ENCODE measurements at regions of chr11 and their contacts with region 1.

Region 1: GRCh38 chr11:25597696-25598095 is 734.2 kb upstream of the ANO3 start:
- DNase-seq: no peak
- ATAC-seq: no peak
- H3K4me3 ChIP-seq: no peak overlapping the region
- H3K27ac ChIP-seq: no peak overlapping the region
- H3K4me1 ChIP-seq: no peaks in the 10 kb centered on the region
- H3K27me3 ChIP-seq: no peaks in the 10 kb centered on the region
- CTCF ChIP-seq: no peak
- POLR2A ChIP-seq: no peak

Region 2: DNA sequence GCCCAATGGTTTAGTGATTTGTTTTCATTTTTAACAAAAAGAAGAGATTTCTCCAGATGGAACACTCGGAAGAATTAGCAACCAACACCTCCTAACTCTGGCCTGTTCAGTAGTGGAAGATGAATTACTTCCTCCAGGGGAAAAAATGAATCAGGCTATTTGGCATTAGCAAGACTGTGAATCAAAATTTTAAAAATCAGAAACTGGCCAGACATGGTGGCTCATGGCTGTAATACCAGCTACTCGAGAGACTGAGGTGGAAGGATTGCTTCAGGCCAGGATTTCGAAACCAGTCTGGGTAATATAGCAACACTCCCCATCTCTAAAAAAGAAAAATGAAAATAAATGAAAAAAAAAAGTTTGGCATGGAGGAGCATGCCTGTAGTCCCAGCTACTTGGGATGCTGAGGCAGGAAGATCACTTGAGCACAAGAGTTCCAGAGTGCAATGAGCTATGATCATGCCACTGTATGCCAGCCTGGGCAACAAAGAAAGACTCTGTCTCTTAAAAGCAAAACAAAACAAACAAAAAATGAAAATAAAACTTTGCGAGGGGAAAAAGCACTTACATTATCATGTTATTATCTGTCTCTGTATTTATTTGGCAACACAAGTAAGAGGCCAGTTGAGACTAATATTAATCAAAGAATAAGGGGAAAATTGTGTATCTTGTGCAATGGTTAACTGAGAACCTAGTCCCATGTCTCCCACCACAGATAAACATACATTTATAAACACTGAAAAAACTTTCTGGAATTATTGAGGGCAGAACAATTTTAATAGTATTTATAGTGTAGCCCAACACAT is 62.0 kb before region 1 on chr11:
- intact Hi-C with region 1: loop called in 1 of 10 experiments (anchors 10 kb)
- DNase-seq: peak in 1 of 5 donors; percentile 22
- ATAC-seq: peak; percentile 42 to 92 (median 68)
- H3K4me3 ChIP-seq: no peak overlapping the region
- H3K27ac ChIP-seq: peak overlapping the region in 2 of 12 donors; percentile 16 to 18
- H3K4me1 ChIP-seq: no peaks in the 10 kb centered on the region
- H3K27me3 ChIP-seq: no peaks in the 10 kb centered on the region
- CTCF ChIP-seq: no peak
- POLR2A ChIP-seq: no peak

Measured in heart left ventricle (tissue), 16 donors.